IMR-90 (cell line): ENCODE measurements at regions of chr2 and their contacts with region 1.

Region 1: DNA sequence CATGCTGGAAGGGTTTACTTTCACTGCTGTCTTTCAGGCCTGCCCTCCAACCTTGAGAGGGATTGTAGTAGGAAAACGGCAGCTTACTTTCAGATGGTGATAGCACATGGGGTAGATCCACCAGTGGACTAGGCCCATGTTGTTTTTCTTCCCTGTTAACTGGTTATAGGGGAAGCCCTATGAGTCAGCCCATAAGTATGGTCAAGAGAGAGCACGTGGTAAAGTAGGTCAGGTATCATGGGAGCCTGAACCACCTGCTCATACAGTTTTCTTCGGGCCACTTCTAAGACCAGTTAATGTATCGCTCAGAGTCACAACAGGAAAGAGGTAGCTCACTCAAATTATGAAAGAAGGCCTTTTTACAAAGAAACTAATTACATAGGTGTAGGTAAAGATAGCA is 33.0 kb downstream of the PDK1 start:
- DNase-seq: peak; percentile 61
- ATAC-seq: no peak
- H3K4me3 ChIP-seq: no peak overlapping the region
- H3K27ac ChIP-seq: no peak overlapping the region
- H3K4me1 ChIP-seq: peaks cover 5% of the 10 kb centered on the region; the same call in 1 of the 2 replicates
- H3K27me3 ChIP-seq: no peaks in the 10 kb centered on the region
- CTCF ChIP-seq: no peak
- POLR2A ChIP-seq: no peak
- RAD21 ChIP-seq: no peak

Region 2: GRCh38 chr2:172442072-172442895 is 146.6 kb before region 1 on chr2:
- CTCF ChIA-PET with region 1: no interaction called
- POLR2A ChIA-PET with region 1: no interaction called
- dilution Hi-C with region 1: no loop called
- in situ Hi-C with region 1: no loop called
- intact Hi-C with region 1: no loop called
- DNase-seq: peak; percentile 97
- ATAC-seq: peak; percentile 89
- H3K4me3 ChIP-seq: no peak overlapping the region
- H3K27ac ChIP-seq: no peak overlapping the region
- H3K4me1 ChIP-seq: peaks cover 13% of the 10 kb centered on the region
- H3K27me3 ChIP-seq: no peaks in the 10 kb centered on the region
- CTCF ChIP-seq: no peak
- POLR2A ChIP-seq: no peak
- RAD21 ChIP-seq: no peak

Region 3: GRCh38 chr2:172662099-172662498 is 73.2 kb after region 1 on chr2:
- CTCF ChIA-PET with region 1: interaction called, 5 read pairs
- POLR2A ChIA-PET with region 1: no interaction called
- dilution Hi-C with region 1: no loop called
- in situ Hi-C with region 1: no loop called
- intact Hi-C with region 1: loop called (anchors 2 kb)
- DNase-seq: no peak
- ATAC-seq: no peak; the same call in 1 of the 2 replicates
- H3K4me3 ChIP-seq: no peak overlapping the region
- H3K27ac ChIP-seq: no peak overlapping the region
- H3K4me1 ChIP-seq: 0 out of 2 replicates have a peak, but pooled peaks cover under 1% of the 10 kb centered on the region
- H3K27me3 ChIP-seq: no peaks in the 10 kb centered on the region
- CTCF ChIP-seq: peak; percentile 30; the same call in 1 of the 2 replicates
- POLR2A ChIP-seq: no peak
- RAD21 ChIP-seq: peak; percentile 44

Region 4: DNA sequence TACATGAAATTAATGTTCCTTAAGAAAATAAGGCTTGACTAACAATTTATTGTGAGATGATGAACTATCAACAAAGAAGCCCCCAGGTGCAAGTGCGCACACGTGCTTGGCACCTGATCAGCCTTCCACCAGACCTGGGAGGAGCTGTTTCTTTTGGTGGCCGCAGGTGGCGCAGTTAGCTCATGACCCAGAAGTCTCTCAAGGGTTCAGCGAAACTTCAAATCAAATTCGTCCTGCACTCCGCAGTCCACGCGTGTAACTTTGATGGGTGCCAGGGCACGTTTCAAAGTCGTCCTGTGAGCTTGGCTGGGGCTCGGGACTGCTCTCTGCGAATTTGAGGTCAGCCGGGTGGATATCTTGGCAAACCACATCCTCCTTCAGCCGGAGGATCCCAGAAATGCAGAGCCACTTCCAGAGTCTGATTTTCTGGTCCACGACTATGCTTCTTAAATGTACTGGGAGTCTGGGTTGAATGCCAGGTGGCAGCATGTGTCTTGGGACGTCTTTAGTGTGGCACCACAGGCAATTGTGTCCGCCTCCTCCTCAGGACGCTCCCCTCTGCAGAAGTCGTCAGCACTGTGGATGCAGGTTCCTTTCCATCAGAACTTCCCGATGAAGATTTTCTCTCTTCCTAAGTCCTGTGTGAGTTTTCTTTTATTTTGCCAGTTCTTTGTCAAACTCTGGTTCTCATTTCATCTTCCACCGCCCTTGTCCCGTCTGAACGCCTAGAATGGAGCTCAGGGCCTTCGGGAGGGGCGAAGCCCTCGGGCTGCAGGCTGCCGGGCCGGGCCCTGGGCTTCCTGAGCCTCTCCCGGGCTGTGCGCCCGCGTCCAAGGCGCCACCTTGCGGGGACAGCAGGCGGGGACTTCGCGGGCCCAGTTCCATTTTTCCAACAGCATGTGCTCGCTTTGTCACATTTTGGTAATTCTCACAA is 85.4 kb after region 1 on chr2:
- CTCF ChIA-PET with region 1: interaction called, 4 read pairs
- POLR2A ChIA-PET with region 1: no interaction called
- dilution Hi-C with region 1: no loop called
- in situ Hi-C with region 1: no loop called
- intact Hi-C with region 1: loop called (anchors 1 kb)
- DNase-seq: no peak
- ATAC-seq: peak; percentile 85
- H3K4me3 ChIP-seq: no peak overlapping the region
- H3K27ac ChIP-seq: no peak overlapping the region
- H3K4me1 ChIP-seq: peaks cover 3% of the 10 kb centered on the region; the same call in 1 of the 2 replicates
- H3K27me3 ChIP-seq: no peaks in the 10 kb centered on the region
- CTCF ChIP-seq: peak; percentile 46
- POLR2A ChIP-seq: no peak
- RAD21 ChIP-seq: peak; percentile 55

Region 5: DNA sequence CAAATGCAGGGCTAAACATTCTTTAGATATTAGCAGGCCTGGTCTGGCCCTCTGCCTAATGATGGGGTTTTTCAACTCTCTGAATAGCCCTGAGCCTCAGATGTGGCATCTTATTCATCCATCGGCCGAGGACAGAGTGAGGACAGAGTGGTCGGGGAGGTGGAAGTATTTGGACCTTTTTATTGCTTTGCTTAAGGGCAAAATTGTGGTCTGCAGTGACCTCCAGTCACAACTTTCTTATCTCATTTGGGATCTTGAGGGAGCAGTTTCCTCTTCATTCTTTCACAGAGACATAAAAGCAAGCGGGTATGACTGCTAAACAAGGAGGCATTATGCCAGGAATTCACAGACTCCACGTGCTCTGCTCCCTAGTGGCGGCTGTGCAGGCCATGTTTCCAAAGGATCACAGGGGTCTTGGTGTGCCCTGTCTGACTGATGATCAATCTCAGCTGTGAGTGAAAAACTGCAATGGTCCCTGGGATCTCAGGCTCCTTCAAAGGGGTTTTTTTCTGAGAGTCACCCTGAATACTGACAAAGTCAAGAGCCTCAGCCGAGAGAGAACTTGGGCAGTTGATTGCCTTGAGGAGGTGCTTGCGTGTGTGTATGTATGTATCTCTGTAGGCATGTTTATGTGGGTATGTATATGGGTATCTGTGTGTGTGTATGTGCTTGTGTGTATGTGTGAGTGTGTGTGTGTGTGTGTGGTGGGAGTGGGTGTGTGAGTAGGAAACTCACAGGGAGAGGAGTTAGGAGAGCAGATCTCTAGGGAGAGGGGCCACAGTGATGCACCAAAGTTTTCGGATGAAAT is 194.4 kb after region 1 on chr2:
- CTCF ChIA-PET with region 1: no interaction called
- POLR2A ChIA-PET with region 1: no interaction called
- dilution Hi-C with region 1: no loop called
- in situ Hi-C with region 1: no loop called
- intact Hi-C with region 1: loop called (anchors 5 kb)
- DNase-seq: peak; percentile 94
- ATAC-seq: peak; percentile 89
- H3K4me3 ChIP-seq: no peak overlapping the region
- H3K27ac ChIP-seq: peak overlapping the region; percentile 44
- H3K4me1 ChIP-seq: peaks cover 14% of the 10 kb centered on the region
- H3K27me3 ChIP-seq: no peaks in the 10 kb centered on the region
- CTCF ChIP-seq: peak; percentile 22; the same call in 1 of the 2 replicates
- POLR2A ChIP-seq: no peak
- RAD21 ChIP-seq: no peak

Region 6: GRCh38 chr2:173965329-173966025 is 1376.5 kb after region 1 on chr2 and contains the start of gene SP3:
- CTCF ChIA-PET with region 1: no interaction called
- POLR2A ChIA-PET with region 1: no interaction called
- dilution Hi-C with region 1: no loop called
- in situ Hi-C with region 1: no loop called
- intact Hi-C with region 1: no loop called
- DNase-seq: peak; percentile 97
- ATAC-seq: peak; percentile 66
- H3K4me3 ChIP-seq: peak within 1 kb of the TSS; percentile 93
- H3K27ac ChIP-seq: peak within 1 kb of the TSS; percentile 99
- H3K4me1 ChIP-seq: peaks cover 7% of the 10 kb centered on the region
- H3K27me3 ChIP-seq: no peaks in the 10 kb centered on the region
- CTCF ChIP-seq: no peak
- POLR2A ChIP-seq: no peak
- RAD21 ChIP-seq: no peak; the same call in 1 of the 2 replicates
- total RNA-seq, gene SP3: 136 and 137 TPM in 2 replicates